OCI-LY7 (cell line): ENCODE measurements at regions of chr17 and their contacts with region 1.

Region 1: GRCh38 chr17:74961657-74962490 is 10.7 kb downstream of the HID1 start:
- DNase-seq: peak; percentile 90
- H3K4me3 ChIP-seq: no peak overlapping the region
- H3K27ac ChIP-seq: no peak overlapping the region
- H3K4me1 ChIP-seq: peaks cover 7% of the 10 kb centered on the region
- CTCF ChIP-seq: peak; percentile 95

Region 2: GRCh38 chr17:74790161-74791054 is 171.5 kb before region 1 on chr17:
- CTCF ChIA-PET with region 1: interaction called, 5 read pairs
- POLR2A ChIA-PET with region 1: no interaction called
- intact Hi-C with region 1: loop called (anchors 2 kb)
- DNase-seq: no peak
- H3K4me3 ChIP-seq: no peak overlapping the region
- H3K27ac ChIP-seq: no peak overlapping the region
- H3K4me1 ChIP-seq: peaks cover 14% of the 10 kb centered on the region
- CTCF ChIP-seq: no peak

Region 3: DNA sequence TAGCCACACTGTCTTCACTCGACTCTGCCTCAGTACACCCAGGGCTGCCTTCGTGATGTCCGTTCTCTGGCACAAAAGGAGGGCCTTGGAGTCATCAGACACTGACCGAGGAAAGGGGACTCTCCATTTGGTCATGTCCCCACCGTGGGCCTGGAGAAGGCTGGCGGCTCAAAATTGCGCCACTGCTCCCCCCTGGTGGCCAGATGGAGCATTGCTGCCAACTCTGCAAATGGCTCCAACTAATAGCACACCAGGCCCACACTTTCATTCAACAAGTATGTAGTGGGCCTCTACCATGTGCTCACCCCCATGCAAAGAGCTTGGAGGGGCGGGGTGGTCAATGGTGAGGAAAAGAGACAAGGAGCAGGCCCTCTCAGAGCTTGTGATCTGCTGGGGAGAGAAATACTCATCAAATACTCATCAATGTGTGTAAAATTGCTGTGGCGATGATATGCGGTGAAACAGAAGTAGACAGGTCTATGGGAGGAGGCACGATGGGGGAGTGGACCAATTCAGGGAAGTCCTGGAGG is 96.9 kb before region 1 on chr17:
- CTCF ChIA-PET with region 1: interaction called, 3 read pairs
- POLR2A ChIA-PET with region 1: no interaction called
- intact Hi-C with region 1: loop called (anchors 1 kb)
- DNase-seq: peak; percentile 79
- H3K4me3 ChIP-seq: no peak overlapping the region
- H3K27ac ChIP-seq: no peak overlapping the region
- H3K4me1 ChIP-seq: peaks cover 18% of the 10 kb centered on the region
- CTCF ChIP-seq: peak; percentile 100

Region 4: GRCh38 chr17:75006653-75007052 is 44.8 kb after region 1 on chr17:
- CTCF ChIA-PET with region 1: interaction called, 26 read pairs
- POLR2A ChIA-PET with region 1: interaction called, 16 read pairs
- intact Hi-C with region 1: loop called (anchors 1 kb)
- DNase-seq: no peak
- H3K4me3 ChIP-seq: no peak overlapping the region
- H3K27ac ChIP-seq: no peak overlapping the region
- H3K4me1 ChIP-seq: peaks cover 4% of the 10 kb centered on the region
- CTCF ChIP-seq: peak; percentile 51; the same call in 1 of the 2 replicates

Region 5: DNA sequence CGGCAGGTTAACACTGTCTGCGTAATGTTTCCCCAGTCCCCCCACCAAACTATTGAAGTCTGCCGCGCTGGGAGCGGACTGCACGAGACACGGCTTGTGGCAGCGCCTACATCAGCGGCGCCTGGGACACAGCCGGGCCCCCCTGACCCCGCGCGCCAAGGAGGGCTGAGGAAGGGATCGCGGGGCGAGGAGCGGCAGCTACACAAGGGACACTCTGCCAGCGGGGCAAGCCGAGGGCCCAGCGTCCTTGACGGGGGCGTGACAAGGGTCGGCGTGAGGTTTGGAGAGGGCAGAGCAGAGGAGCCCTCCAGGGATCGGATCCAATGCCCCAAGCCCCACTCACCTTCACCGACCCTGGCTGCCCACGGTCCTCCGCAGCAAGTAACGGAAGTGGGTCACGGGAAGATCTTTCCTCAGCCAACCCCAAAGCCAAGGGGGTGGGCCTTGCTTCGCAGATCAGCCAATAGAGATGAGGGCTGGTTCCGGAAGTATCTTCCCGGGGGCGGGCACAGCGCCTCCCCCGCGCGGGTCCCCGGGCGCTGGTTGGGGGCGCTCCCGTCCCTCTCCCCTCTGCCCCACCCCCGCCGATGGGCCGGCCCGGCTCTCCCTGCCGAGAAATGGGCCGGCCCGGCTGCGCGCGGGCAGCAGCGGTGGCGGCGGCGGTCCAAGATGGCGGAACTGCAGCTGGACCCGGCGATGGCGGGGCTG is 84.9 kb after region 1 on chr17 and contains the starts of genes ATP5PD and KCTD2:
- CTCF ChIA-PET with region 1: interaction called, 3 read pairs
- POLR2A ChIA-PET with region 1: interaction called, 3 read pairs
- intact Hi-C with region 1: loop called (anchors 2 kb)
- DNase-seq: peak; percentile 99
- H3K4me3 ChIP-seq: peak within 1 kb of the TSS; percentile 75
- H3K27ac ChIP-seq: peak within 1 kb of the TSS; percentile 43
- H3K4me1 ChIP-seq: peaks cover 14% of the 10 kb centered on the region
- CTCF ChIP-seq: 0 out of 2 replicates have a peak, but pooled peaks have one; percentile 15
- total RNA-seq, gene ATP5PD: 293 and 301 TPM in 2 replicates
- total RNA-seq, gene KCTD2: 26.0 and 29.8 TPM in 2 replicates